BJ (cell line): ENCODE measurements at regions of chr9 and their contacts with region 1.

Region 1: GRCh38 chr9:121545875-121546423 is 46.3 kb upstream of the GGTA1 start:
- DNase-seq: peak; percentile 52
- H3K4me3 ChIP-seq: no peak overlapping the region
- H3K27me3 ChIP-seq: peaks cover 6% of the 10 kb centered on the region
- CTCF ChIP-seq: peak; percentile 97

Region 2: GRCh38 chr9:121510766-121511550 is 35.0 kb before region 1 on chr9:
- CTCF ChIA-PET with region 1: no interaction called
- POLR2A ChIA-PET with region 1: no interaction called
- DNase-seq: no peak
- H3K4me3 ChIP-seq: no peak overlapping the region
- H3K27me3 ChIP-seq: peaks cover 2% of the 10 kb centered on the region
- CTCF ChIP-seq: no peak

Region 3: GRCh38 chr9:121557581-121558447 is 11.9 kb after region 1 on chr9:
- CTCF ChIA-PET with region 1: interaction called, 16 read pairs
- POLR2A ChIA-PET with region 1: interaction called, 7 read pairs
- DNase-seq: peak; percentile 78
- H3K4me3 ChIP-seq: no peak overlapping the region
- H3K27me3 ChIP-seq: peaks cover 3% of the 10 kb centered on the region
- CTCF ChIP-seq: no peak

Region 4: DNA sequence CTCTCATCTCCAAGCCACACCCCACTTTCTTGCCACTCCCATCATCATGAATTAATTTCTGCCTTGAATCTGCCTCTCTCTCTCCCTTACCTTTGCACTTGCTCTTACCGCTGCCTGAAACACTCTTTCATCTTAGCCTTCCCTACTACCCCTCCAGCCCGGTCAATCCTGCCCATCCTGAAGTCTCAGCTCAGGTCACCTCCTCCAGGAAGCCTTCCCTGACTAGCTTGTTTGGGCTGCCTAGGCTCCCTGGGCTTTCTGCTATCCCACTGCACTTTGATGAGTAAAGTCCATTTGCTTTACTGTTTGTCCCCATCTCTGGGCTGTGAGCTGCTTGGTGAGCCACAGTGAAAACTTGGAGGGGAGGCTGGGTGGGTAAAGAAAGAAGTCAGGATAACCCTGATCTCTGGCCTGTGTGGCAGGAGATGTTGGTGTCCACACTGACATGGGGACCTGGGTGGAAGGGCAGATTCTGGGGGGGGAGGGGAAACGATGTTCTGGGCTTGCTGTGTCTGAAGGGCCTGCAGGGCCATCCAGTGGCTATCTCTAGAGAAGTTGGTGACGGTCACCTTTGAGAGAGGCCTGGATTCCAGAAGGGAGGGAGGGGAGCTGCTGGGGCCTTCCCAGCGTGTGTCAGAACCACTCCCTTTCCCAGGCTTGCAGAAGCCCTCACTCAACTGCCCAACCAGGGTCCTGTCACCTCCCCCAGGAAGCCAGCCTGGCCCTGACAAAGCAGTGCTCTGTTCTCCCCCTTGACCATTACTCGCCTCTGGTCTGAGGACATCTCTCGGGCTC is 30.5 kb after region 1 on chr9:
- CTCF ChIA-PET with region 1: interaction called, 15 read pairs
- POLR2A ChIA-PET with region 1: no interaction called
- DNase-seq: no peak
- H3K4me3 ChIP-seq: no peak overlapping the region
- H3K27me3 ChIP-seq: peaks cover 3% of the 10 kb centered on the region
- CTCF ChIP-seq: no peak

Region 5: DNA sequence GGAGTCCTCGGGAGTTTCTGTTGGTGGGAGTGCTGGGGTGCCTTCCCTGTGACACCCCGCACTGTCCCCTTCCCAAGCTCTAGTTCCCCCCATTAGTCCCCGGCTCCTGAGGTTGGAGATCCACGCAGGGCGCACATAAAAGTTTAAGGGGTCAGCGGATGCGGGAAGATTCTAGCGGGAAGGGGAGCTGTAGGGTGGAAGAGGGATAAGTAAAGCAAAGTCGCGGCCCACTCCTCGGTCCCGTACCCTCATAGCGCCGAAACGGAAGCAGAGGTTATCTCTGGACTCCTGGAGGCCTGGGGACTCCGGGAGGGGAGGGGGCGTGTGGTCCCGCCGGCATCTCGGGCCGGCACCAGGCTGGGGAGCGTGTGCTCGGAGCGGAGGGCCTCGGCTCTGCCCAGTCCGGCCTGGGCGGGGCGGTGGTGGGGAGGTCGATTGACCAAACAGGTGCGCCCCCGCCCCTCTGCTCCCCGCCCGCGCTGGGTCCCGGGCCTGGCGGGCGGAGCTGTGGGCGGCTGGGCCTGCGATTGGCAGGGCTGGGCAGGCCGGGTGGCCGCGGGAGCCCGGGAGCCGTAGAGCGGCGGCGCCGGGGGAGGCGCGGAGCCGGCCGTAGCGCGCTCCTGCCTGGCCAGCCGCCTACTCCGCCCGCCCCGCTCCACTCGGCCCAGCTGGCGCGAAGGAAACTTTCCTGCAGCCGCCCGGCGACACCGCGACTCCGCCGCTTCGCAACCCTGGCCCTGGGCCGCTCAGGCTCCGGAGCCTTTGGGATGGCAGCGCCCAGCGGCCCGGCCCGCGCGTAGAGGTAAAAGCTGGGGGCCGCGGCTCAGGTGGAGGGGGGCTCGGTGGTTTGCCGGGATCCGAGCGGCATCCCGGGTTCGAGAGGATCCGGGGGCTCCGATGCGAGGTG is 53.3 kb after region 1 on chr9:
- CTCF ChIA-PET with region 1: interaction called, 18 read pairs
- POLR2A ChIA-PET with region 1: no interaction called
- DNase-seq: no peak
- H3K4me3 ChIP-seq: peak overlapping the region; percentile 54
- H3K27me3 ChIP-seq: 0 out of 2 replicates have a peak, but pooled peaks cover 2% of the 10 kb centered on the region
- CTCF ChIP-seq: no peak

Region 6: GRCh38 chr9:121686930-121687541 is 141.1 kb after region 1 on chr9:
- CTCF ChIA-PET with region 1: interaction called, 55 read pairs
- POLR2A ChIA-PET with region 1: no interaction called
- DNase-seq: no peak
- H3K4me3 ChIP-seq: no peak overlapping the region
- H3K27me3 ChIP-seq: no peaks in the 10 kb centered on the region
- CTCF ChIP-seq: peak; percentile 95

Region 7: GRCh38 chr9:121698627-121699570 is 152.9 kb after region 1 on chr9:
- CTCF ChIA-PET with region 1: interaction called, 34 read pairs
- POLR2A ChIA-PET with region 1: interaction called, 5 read pairs
- DNase-seq: no peak
- H3K4me3 ChIP-seq: peak overlapping the region; percentile 69
- H3K27me3 ChIP-seq: no peaks in the 10 kb centered on the region; the same call in 1 of the 2 replicates
- CTCF ChIP-seq: no peak

Region 8: DNA sequence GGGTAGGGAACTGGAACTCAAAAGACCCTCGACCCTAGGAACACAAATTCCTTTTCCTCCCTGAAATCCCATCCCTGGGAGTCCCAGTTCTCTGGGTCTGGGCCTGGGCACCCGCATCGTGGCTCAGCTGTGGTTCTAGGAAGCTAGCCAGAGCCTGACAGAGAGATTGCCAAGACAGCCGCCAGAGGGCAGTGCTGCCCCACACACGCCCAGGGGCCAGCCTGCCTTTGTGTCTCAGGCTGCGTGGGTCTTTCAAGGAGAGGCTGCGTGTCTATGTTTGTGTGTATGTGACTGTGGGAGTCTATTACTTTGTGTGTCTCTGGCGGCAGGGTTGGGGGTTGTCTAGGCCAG is 579.2 kb after region 1 on chr9:
- CTCF ChIA-PET with region 1: interaction called, 15 read pairs
- POLR2A ChIA-PET with region 1: no interaction called
- DNase-seq: no peak
- H3K4me3 ChIP-seq: no peak overlapping the region
- H3K27me3 ChIP-seq: no peaks in the 10 kb centered on the region
- CTCF ChIP-seq: peak; percentile 97